Aorta (tissue), 5 donors: ENCODE measurements at regions of chr3 and their contacts with region 1.

Region 1: GRCh38 chr3:51391075-51391567 is at the start of gene RBM15B:
- DNase-seq: peak; percentile 99
- ATAC-seq: peak; percentile 98
- H3K4me3 ChIP-seq: peak within 1 kb of the TSS; percentile 75 to 96
- H3K27ac ChIP-seq: peak within 1 kb of the TSS; percentile 43 to 85
- H3K4me1 ChIP-seq: peaks cover 0 to 2% of the 10 kb centered on the region in 2 donors
- H3K27me3 ChIP-seq: no peaks in the 10 kb centered on the region
- total RNA-seq, gene RBM15B: 22.4 to 25.4 TPM

Region 2: DNA sequence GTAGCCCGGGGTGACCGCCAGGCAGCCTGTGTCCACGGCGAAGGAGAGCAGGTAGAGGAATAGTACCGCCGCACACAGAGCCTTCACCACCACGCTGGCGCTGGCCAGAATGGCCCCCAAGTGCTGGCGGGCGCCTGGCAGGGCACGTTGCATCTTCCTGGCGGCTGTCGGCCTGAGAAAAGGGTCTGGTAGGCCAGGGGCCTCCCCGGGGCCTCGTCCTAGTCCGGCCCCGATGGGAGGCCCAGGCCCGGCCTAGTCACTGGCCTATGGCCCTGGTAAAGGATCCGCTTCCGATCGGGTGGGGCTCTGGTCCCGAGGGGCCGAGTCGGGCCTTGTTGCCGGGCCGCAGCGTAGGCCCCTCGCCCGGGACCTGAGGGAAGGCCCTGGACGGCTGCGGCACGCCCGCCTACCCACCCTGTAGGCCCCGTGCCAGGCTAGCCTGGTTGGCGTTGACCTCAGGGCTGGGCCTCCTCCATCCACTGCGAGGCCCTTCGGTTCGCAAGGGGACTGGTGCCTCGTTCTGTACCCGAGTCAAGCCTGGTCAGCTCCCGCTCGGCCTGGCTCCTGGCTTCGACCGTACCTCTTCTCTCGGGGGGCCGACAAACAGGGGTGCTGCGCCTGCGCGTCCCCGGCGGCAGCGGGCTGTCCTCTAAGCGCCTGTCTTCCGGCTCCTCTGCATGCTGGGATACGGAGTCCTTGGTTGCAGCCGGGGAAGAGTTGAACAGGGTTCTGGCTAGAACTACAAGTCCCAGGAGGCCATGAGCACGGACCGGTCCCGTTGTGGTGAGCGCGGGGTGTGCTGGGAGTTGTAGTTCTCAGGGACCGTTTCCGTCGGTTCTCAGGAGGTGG is 1032.0 kb before region 1 on chr3 and contains the start of gene TMEM115:
- intact Hi-C with region 1: loop called in 1 of 2 experiments (anchors 10 kb)
- DNase-seq: peak; percentile 98
- ATAC-seq: peak; percentile 98
- H3K4me3 ChIP-seq: peak within 1 kb of the TSS; percentile 63 to 67
- H3K27ac ChIP-seq: peak within 1 kb of the TSS in 1 of 2 donors; percentile 59
- H3K4me1 ChIP-seq: no peaks in the 10 kb centered on the region
- H3K27me3 ChIP-seq: no peaks in the 10 kb centered on the region
- total RNA-seq, gene TMEM115: 27.8 to 32.9 TPM

Region 3: GRCh38 chr3:51434746-51435327 is 43.7 kb after region 1 on chr3:
- intact Hi-C with region 1: loop called in 1 of 2 experiments (anchors 2 kb)
- DNase-seq: no peak
- ATAC-seq: no peak
- H3K4me3 ChIP-seq: no peak overlapping the region
- H3K27ac ChIP-seq: no peak overlapping the region
- H3K4me1 ChIP-seq: no peaks in the 10 kb centered on the region
- H3K27me3 ChIP-seq: no peaks in the 10 kb centered on the region

Region 4: DNA sequence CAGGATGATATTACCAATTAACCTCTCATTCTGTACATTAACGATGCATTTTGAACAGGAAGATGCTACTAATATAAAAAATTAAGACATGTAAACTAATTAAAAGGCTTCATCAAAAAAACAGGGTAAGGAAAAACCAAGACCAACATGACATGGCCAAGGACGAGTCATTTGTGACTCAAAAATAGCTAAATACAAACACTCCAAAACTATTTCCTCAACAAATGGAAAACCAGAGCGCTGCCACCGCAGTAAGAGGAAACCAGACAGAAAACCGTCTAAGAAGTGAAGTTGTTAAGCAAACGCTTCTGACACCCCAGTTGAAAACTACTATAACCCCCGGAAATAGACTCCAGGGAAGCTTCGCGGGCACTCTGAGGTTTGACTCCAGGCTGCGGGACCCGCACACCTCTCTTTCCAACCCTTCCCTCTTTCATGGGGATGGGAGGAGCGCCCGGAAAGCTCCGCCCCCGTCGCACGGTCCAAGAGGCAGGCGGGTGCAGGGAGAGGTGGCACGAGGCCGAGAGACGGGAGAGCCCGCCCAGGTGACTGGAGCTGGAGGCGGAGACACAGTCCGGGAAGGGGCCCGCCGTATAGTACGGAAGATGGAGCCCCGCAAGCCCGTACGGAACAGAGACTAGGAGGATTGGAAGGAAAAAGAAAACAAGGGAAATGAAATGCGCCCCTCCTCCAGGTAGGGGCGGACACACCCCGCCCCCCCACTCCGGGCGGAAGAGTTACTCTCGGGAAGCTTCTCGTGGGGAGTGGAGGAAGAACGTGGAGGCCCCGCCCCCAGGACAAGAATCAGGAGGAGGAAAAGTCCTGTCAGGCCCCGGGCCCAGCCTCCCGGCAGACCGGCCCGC is 108.0 kb after region 1 on chr3:
- intact Hi-C with region 1: loop called (anchors 5 kb)
- DNase-seq: peak; percentile 97
- ATAC-seq: peak; percentile 92
- H3K4me3 ChIP-seq: peak overlapping the region; percentile 88 to 92
- H3K27ac ChIP-seq: peak overlapping the region; percentile 84 to 90
- H3K4me1 ChIP-seq: no peaks in the 10 kb centered on the region
- H3K27me3 ChIP-seq: no peaks in the 10 kb centered on the region

Region 5: GRCh38 chr3:51670823-51671733 is 280.0 kb after region 1 on chr3 and contains the start of gene TEX264:
- intact Hi-C with region 1: loop called (anchors 10 kb)
- DNase-seq: peak; percentile 95 to 97
- ATAC-seq: peak; percentile 94
- H3K4me3 ChIP-seq: peak within 1 kb of the TSS; percentile 66 to 82
- H3K27ac ChIP-seq: peak within 1 kb of the TSS in 1 of 2 donors; percentile 73
- H3K4me1 ChIP-seq: no peaks in the 10 kb centered on the region
- H3K27me3 ChIP-seq: no peaks in the 10 kb centered on the region
- total RNA-seq, gene TEX264: 18.2 to 26.0 TPM